ENCODE measurements at regions of chr12 and their contacts with region 1.

Region 1: DNA sequence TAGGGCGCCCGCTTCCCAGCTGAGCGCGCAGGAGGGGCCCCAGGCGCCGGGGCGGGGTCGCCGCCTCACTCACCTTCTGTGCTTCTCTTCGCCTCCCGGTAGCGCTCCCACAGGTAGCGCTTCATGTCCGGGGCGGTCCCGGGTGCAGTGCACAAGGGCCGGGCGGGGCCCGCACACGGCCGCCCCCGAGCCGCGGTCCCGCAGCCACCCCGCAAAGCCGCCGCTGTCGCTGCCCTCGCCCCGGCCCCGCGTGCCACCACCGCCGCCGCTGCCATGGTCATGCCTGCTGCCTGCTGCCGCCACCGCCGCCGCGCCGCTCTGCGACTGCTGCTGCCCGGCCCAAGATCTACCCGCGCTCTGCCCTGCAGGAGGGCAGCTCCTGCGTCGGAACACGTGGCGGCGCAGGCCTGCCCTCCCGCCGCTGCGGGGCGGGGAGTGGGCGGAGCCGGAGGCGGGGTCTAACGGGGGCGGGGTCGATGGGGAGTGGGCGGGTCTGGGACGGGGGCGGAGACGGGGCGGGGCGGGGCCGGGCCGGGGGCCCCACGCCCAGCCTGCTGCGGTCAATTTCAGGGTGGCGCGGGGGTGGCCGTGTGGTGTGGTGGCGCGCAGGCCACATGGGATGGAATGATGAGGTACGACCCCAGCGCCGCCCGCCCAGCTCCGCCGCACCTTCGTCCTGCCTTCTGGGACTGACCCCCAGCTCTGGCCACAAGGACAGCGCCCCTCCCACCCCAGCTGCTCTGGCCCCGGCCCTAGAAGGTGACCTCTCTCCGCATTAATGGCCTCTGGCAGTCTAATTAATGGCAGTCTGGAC is at the start of gene NT5DC3:
- DNase-seq: peak; percentile 72 to 92 (median 82)
- ATAC-seq: peak; percentile 87
- H3K4me3 ChIP-seq: peak within 1 kb of the TSS; percentile 78
- H3K4me3 Mint-ChIP-seq: peak within 1 kb of the TSS; percentile 94
- H3K27ac ChIP-seq: peak within 1 kb of the TSS in 1 of 2 donors; percentile 60
- H3K27ac Mint-ChIP-seq: peak within 1 kb of the TSS; percentile 78
- H3K4me1 ChIP-seq: peaks cover 19% of the 10 kb centered on the region
- H3K4me1 Mint-ChIP-seq: peaks cover 21% of the 10 kb centered on the region
- H3K27me3 ChIP-seq: no peaks in the 10 kb centered on the region
- H3K27me3 Mint-ChIP-seq: no peaks in the 10 kb centered on the region
- CTCF ChIP-seq: no peak
- total RNA-seq, gene NT5DC3: 3.5 to 4.0 TPM

Region 2: DNA sequence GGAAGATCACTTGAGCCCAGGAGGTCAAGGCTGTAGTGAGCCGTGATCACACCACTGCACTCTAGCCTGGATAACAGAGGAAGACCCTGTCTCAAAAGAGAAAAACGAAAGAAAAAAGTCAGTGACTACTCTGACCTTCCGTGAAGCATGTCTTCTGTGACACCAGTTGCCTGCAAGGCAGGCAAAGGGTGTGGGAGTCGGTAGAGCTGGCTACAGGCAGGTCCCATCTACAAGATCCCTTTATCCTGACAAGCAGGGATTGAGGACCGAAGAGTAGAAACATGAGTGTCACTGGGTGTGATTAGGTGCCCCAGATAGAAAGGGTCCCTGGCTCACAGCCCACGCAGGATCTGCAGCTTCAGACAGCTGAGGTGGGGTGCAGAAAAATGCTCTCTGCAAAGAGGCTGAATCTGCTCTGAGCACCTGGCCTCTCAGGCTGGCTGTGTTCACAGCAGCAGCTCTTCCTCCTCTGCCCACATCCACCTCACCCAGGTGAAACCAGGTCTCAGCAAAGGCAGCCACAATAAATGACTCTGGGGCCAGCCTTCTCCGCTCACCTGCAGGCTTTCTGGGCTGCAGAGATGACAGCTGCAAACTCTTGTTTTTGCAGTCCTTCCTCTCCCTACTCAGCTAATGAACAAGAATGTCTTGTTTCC is 60.6 kb after region 1 on chr12:
- CTCF ChIA-PET with region 1: no interaction called
- POLR2A ChIA-PET with region 1: interaction called, 10 read pairs
- intact Hi-C with region 1: no loop called
- DNase-seq: peak; percentile 40 to 79 (median 57)
- ATAC-seq: peak; percentile 96
- H3K4me3 ChIP-seq: peak overlapping the region; percentile 43
- H3K4me3 Mint-ChIP-seq: peak overlapping the region; percentile 70
- H3K27ac ChIP-seq: peak overlapping the region; percentile 51 to 68
- H3K27ac Mint-ChIP-seq: peak overlapping the region; percentile 95
- H3K4me1 ChIP-seq: peaks cover 55% of the 10 kb centered on the region
- H3K4me1 Mint-ChIP-seq: peaks cover 76% of the 10 kb centered on the region
- H3K27me3 ChIP-seq: no peaks in the 10 kb centered on the region
- H3K27me3 Mint-ChIP-seq: no peaks in the 10 kb centered on the region
- CTCF ChIP-seq: no peak

Region 3: GRCh38 chr12:103965590-103966504 is 124.8 kb after region 1 on chr12 and contains the start of gene TDG:
- CTCF ChIA-PET with region 1: no interaction called
- POLR2A ChIA-PET with region 1: interaction called, 9 read pairs
- intact Hi-C with region 1: loop called in 1 of 2 experiments (anchors 5 kb)
- DNase-seq: peak; percentile 89 to 99 (median 95)
- ATAC-seq: peak; percentile 94
- H3K4me3 ChIP-seq: peak within 1 kb of the TSS; percentile 62
- H3K4me3 Mint-ChIP-seq: peak within 1 kb of the TSS; percentile 94
- H3K27ac ChIP-seq: peak within 1 kb of the TSS; percentile 74 to 91
- H3K27ac Mint-ChIP-seq: peak within 1 kb of the TSS; percentile 95
- H3K4me1 ChIP-seq: peaks cover 32% of the 10 kb centered on the region
- H3K4me1 Mint-ChIP-seq: peaks cover 57% of the 10 kb centered on the region
- H3K27me3 ChIP-seq: no peaks in the 10 kb centered on the region
- H3K27me3 Mint-ChIP-seq: no peaks in the 10 kb centered on the region
- CTCF ChIP-seq: peak; percentile 18
- total RNA-seq, gene TDG: 27.5 to 29.6 TPM

Region 4: DNA sequence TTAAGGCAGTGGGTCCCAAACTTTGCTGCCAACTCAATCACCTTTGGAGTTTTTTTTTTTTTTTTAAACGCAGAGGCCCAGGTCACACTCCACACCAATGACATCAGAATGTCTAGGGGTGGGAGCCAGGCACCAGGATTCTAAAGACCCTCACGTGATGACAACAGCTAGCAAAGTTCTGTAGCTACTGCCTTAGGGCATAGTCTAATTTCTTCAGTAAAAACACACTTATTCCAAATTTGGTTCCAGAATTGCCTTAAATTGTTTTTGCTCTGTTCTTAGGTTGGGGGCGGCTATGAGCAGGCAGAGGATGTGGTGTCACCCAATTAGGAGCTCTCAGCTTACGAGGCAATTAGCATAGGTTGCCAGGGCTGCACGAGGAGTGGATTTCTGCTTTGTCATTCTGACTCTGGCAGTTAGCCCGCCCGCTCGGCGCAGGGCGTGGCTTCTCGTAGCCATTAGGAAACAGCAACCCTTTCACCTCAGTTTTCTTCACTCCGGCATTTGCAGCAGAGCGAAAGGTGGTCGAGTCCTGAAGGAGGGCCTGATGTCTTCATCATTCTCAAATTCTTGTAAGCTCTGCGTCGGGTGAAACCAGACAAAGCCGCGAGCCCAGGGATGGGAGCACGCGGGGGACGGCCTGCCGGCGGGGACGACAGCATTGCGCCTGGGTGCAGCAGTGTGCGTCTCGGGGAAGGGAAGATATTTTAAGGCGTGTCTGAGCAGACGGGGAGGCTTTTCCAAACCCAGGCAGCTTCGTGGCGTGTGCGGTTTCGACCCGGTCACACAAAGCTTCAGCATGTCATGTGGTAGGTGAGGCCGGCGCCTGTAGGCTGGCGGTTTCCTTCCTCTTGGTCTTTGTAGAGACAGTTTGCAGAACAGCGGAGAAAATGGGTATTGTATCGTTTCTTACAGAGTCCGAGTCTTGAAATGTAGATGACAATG is 445.7 kb after region 1 on chr12:
- CTCF ChIA-PET with region 1: no interaction called
- POLR2A ChIA-PET with region 1: interaction called, 4 read pairs
- intact Hi-C with region 1: loop called in 1 of 2 experiments (anchors 5 kb)
- DNase-seq: peak; percentile 70 to 96 (median 86)
- ATAC-seq: peak; percentile 84
- H3K4me3 ChIP-seq: peak overlapping the region; percentile 90
- H3K4me3 Mint-ChIP-seq: peak overlapping the region; percentile 98
- H3K27ac ChIP-seq: peak overlapping the region; percentile 67 to 84
- H3K27ac Mint-ChIP-seq: peak overlapping the region; percentile 96
- H3K4me1 ChIP-seq: peaks cover 35% of the 10 kb centered on the region
- H3K4me1 Mint-ChIP-seq: peaks cover 35% of the 10 kb centered on the region
- H3K27me3 ChIP-seq: peaks cover 0 to 7% of the 10 kb centered on the region in 2 experiments
- H3K27me3 Mint-ChIP-seq: no peaks in the 10 kb centered on the region
- CTCF ChIP-seq: no peak

Region 5: GRCh38 chr12:105107494-105108371 is 1266.7 kb after region 1 on chr12 and contains the start of gene WASHC4:
- CTCF ChIA-PET with region 1: no interaction called
- POLR2A ChIA-PET with region 1: no interaction called
- intact Hi-C with region 1: loop called in 1 of 2 experiments (anchors 5 kb)
- DNase-seq: peak; percentile 87 to 96 (median 90)
- ATAC-seq: peak; percentile 95
- H3K4me3 ChIP-seq: peak within 1 kb of the TSS; percentile 93
- H3K4me3 Mint-ChIP-seq: peak within 1 kb of the TSS; percentile 98
- H3K27ac ChIP-seq: peak within 1 kb of the TSS; percentile 95 to 96
- H3K27ac Mint-ChIP-seq: peak within 1 kb of the TSS; percentile 89
- H3K4me1 ChIP-seq: peaks cover 13% of the 10 kb centered on the region
- H3K4me1 Mint-ChIP-seq: peaks cover 49% of the 10 kb centered on the region
- H3K27me3 ChIP-seq: peaks cover 4 to 9% of the 10 kb centered on the region in 2 experiments
- H3K27me3 Mint-ChIP-seq: peaks cover 30% of the 10 kb centered on the region
- CTCF ChIP-seq: no peak
- total RNA-seq, gene WASHC4: 32.5 to 33.6 TPM

Measured in CD4-positive, alpha-beta T cell (primary cell).